ENCODE measurements at regions of chr7 and their contacts with region 1.

Region 1: GRCh38 chr7:106041140-106041717 is 70.9 kb downstream of the SYPL1 start:
- DNase-seq: peak; percentile 42
- ATAC-seq: peak; percentile 29
- H3K4me3 Mint-ChIP-seq: no peak overlapping the region
- H3K27ac Mint-ChIP-seq: no peak overlapping the region
- H3K4me1 Mint-ChIP-seq: no peaks in the 10 kb centered on the region
- H3K27me3 Mint-ChIP-seq: peaks cover 34% of the 10 kb centered on the region

Region 2: DNA sequence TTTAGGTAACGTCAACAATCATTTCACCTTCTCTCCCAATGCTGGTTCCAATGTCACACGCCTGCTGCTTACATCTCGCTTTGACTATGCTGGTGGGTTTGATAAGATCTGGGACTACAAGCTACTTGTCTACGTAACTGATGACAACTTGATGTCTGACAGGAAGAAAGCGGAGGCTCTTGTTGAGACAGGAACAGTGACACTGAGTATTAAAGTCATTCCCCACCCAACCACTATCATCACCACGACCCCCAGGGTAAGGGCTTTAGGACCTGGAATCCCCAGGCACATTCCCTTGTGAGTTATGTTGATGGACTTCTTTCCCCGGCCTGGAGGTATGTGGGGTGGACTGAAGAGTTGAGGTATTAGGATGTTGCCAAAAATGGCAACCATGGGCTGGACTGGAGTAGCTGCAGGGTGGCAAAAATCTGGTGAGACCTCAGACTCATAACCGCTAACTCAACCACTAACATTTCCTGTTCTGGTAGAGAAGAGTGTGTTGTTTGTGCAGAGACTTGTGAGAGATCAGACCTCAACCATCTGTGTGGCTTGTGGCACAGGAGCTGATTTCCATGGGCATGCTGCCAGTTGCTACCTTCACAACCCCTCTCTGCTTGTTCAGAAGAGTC is 18.9 kb before region 1 on chr7:
- CTCF ChIA-PET with region 1: interaction called, 37 read pairs
- DNase-seq: peak; percentile 84
- ATAC-seq: peak; percentile 91
- H3K4me3 Mint-ChIP-seq: peak overlapping the region; percentile 27
- H3K27ac Mint-ChIP-seq: peak overlapping the region; percentile 76
- H3K4me1 Mint-ChIP-seq: peaks cover 35% of the 10 kb centered on the region
- H3K27me3 Mint-ChIP-seq: peaks cover 49% of the 10 kb centered on the region

Region 3: GRCh38 chr7:106029944-106030343 is 11.3 kb before region 1 on chr7:
- CTCF ChIA-PET with region 1: interaction called, 37 read pairs
- DNase-seq: no peak
- ATAC-seq: no peak
- H3K4me3 Mint-ChIP-seq: no peak overlapping the region
- H3K27ac Mint-ChIP-seq: no peak overlapping the region
- H3K4me1 Mint-ChIP-seq: peaks cover under 1% of the 10 kb centered on the region
- H3K27me3 Mint-ChIP-seq: peaks cover 33% of the 10 kb centered on the region

Region 4: GRCh38 chr7:106205621-106206222 is 164.5 kb after region 1 on chr7:
- CTCF ChIA-PET with region 1: no interaction called
- DNase-seq: no peak
- ATAC-seq: no peak
- H3K4me3 Mint-ChIP-seq: no peak overlapping the region
- H3K27ac Mint-ChIP-seq: no peak overlapping the region
- H3K4me1 Mint-ChIP-seq: peaks cover 3% of the 10 kb centered on the region
- H3K27me3 Mint-ChIP-seq: peaks cover 41% of the 10 kb centered on the region

Region 5: GRCh38 chr7:106514881-106515280 is 473.7 kb after region 1 on chr7:
- CTCF ChIA-PET with region 1: no interaction called
- DNase-seq: no peak
- ATAC-seq: no peak
- H3K4me3 Mint-ChIP-seq: no peak overlapping the region
- H3K27ac Mint-ChIP-seq: no peak overlapping the region
- H3K4me1 Mint-ChIP-seq: no peaks in the 10 kb centered on the region
- H3K27me3 Mint-ChIP-seq: peaks cover 41% of the 10 kb centered on the region